Activated CD4-positive, alpha-beta T cell treated with anti-CD3 and anti-CD28 coated beads for 36 hours (primary cell): ENCODE measurements at regions of chr6 and their contacts with region 1.

Region 1: GRCh38 chr6:25842526-25843277 is 10.8 kb upstream of the SLC17A1 start:
- DNase-seq: peak; percentile 34
- ATAC-seq: peak; percentile 95
- H3K4me3 Mint-ChIP-seq: no peak overlapping the region
- H3K27ac Mint-ChIP-seq: no peak overlapping the region
- H3K4me1 Mint-ChIP-seq: no peaks in the 10 kb centered on the region
- H3K27me3 Mint-ChIP-seq: peaks cover 16% of the 10 kb centered on the region

Region 2: DNA sequence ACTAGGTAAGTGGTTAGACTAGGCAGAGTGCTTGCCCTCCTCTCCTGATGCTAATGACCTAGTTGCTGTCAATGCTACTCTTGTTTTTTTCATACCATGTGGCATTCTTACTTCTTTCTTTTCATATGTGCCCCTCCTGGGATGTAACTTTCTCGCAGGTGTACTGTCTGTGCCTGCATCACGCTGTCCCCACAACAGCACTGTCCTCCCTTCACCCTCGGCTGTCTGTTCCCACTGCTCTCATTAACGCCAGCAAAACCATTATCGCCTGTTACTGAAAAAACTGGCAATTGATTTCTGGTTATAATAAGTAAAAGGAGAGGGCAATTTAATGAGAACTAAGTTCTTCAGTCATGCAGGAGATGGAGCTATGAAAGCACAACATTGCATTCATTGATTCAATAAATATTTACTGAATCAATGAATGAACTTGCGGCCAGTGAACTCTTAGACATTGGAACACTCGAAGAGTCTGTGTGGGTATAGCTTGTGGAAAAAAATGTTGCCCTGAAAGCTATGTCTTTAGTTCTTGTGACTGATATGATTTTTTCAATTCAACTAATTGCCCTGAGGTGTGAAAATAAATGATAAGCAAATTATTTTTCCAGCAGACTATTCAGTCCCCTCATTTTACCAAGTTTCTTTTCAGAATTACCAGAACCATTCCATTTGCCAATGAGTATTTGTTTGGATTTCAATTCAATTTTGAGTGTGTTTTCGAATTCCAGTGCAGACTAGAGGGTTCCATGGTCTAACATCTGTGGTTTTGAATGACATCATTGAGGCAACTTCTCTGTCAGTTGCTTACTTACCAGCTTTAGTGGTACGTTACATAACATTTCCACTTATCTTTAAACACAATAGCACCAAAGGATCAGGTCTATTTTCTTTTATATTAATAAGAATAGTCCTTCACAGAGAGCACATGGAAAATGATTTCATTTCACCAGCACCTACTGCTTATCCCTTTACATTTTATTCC is 86.0 kb before region 1 on chr6:
- CTCF ChIA-PET with region 1: no interaction called
- POLR2A ChIA-PET with region 1: no interaction called
- intact Hi-C with region 1: no loop called
- DNase-seq: no peak
- ATAC-seq: no peak
- H3K4me3 Mint-ChIP-seq: no peak overlapping the region
- H3K27ac Mint-ChIP-seq: no peak overlapping the region
- H3K4me1 Mint-ChIP-seq: no peaks in the 10 kb centered on the region
- H3K27me3 Mint-ChIP-seq: peaks cover 15% of the 10 kb centered on the region

Region 3: DNA sequence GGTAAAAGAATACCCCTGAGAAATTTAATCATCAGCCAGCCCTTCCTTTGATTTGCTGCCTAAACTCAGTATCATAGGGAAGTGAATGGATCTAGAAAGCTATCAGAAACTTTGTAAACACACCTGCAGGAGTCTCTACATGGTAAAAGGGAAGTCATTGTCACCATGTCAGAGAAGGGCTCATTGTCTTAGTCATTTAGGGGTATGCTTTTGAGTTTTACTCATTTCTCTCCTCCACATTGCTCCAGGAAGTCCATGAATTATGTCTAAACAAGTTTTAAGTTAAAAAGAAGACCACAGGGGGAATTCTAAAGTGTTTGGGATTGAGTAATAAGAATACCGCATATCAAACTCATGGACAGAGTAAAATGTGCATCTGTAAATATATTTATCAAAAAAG is 13.3 kb before region 1 on chr6:
- CTCF ChIA-PET with region 1: no interaction called
- POLR2A ChIA-PET with region 1: no interaction called
- intact Hi-C with region 1: loop called in 1 of 2 experiments (anchors 1 kb)
- DNase-seq: no peak
- ATAC-seq: peak; percentile 99
- H3K4me3 Mint-ChIP-seq: no peak overlapping the region
- H3K27ac Mint-ChIP-seq: no peak overlapping the region
- H3K4me1 Mint-ChIP-seq: peaks cover 10% of the 10 kb centered on the region
- H3K27me3 Mint-ChIP-seq: peaks cover 29% of the 10 kb centered on the region

Region 4: DNA sequence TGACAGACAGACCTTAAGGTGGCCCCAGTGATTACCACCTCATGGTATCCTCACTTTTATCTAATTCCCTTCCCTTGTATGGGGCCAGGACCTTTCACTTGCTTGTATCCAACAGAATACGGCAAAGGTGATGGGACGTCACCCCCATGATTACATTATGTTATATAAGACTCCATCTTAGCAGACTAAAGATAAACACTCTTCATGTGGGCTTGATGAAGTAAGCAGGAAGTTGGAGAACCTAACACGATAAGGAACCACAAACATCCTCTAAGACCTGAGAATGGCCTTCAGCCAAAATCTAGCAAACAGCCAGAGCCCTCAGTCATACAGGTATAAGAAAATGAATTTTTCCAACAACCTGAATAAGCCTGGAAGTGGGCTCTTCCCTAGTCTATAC is 23.3 kb after region 1 on chr6:
- CTCF ChIA-PET with region 1: interaction called, 3 read pairs
- POLR2A ChIA-PET with region 1: no interaction called
- intact Hi-C with region 1: loop called in 1 of 2 experiments (anchors 1 kb)
- DNase-seq: peak; percentile 8
- ATAC-seq: peak; percentile 66
- H3K4me3 Mint-ChIP-seq: no peak overlapping the region
- H3K27ac Mint-ChIP-seq: no peak overlapping the region
- H3K4me1 Mint-ChIP-seq: peaks cover 16% of the 10 kb centered on the region
- H3K27me3 Mint-ChIP-seq: no peaks in the 10 kb centered on the region

Region 5: DNA sequence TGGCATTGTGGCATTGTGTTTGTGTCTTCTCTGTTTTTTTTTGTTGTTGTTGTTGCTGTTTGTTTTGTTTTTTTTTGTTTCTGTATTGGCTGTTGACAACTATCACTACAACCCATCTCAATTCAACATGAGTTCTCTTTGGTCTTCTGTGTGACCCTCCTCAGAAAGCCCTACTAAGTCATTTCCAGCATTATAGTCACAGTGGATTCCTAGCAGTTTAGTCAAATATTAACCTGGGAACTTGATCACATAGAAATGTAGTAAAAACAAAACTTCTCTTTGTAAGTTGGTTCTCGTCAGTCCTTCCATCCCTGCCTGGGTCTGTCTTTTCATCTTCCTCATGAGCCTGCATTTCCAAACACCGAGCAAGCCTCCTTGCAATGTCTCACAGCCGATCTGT is 71.0 kb after region 1 on chr6:
- CTCF ChIA-PET with region 1: no interaction called
- POLR2A ChIA-PET with region 1: no interaction called
- intact Hi-C with region 1: loop called in 1 of 2 experiments (anchors 2 kb)
- DNase-seq: peak; percentile 44
- ATAC-seq: peak; percentile 67
- H3K4me3 Mint-ChIP-seq: no peak overlapping the region
- H3K27ac Mint-ChIP-seq: peak overlapping the region; percentile 75
- H3K4me1 Mint-ChIP-seq: peaks cover 63% of the 10 kb centered on the region
- H3K27me3 Mint-ChIP-seq: no peaks in the 10 kb centered on the region

Region 6: DNA sequence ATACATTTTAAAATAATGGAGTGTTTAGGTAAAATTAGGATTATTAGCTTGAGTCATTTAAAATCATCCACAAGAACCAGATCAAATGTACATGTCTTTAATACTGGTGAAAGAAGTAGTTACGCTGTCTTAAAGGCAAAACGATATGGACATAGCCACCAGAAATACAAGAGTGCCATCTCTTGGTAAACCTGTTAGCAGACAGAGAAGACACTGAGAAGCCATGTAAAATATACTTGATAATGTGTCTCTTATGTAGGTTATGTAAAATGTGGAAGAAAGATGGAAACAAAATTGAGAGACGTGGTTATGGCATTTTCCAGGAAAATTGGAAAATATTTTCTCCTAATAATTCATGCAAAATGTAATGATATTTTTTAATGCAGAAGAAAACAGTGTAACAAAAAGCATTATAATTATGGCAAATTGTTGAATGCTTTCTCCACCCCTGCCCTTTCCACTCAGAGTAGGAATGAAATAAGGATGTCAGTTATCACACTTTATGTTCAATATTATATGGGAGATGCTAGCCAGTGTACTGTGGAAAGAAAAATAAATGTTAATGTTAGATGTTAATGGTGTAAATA is 100.0 kb after region 1 on chr6:
- CTCF ChIA-PET with region 1: no interaction called
- POLR2A ChIA-PET with region 1: no interaction called
- intact Hi-C with region 1: no loop called
- DNase-seq: no peak
- ATAC-seq: peak; percentile 70
- H3K4me3 Mint-ChIP-seq: no peak overlapping the region
- H3K27ac Mint-ChIP-seq: no peak overlapping the region
- H3K4me1 Mint-ChIP-seq: peaks cover 22% of the 10 kb centered on the region
- H3K27me3 Mint-ChIP-seq: peaks cover 4% of the 10 kb centered on the region